Right lobe of liver (tissue), 6 donors: ENCODE measurements at regions of chr1 and their contacts with region 1.

Region 1: DNA sequence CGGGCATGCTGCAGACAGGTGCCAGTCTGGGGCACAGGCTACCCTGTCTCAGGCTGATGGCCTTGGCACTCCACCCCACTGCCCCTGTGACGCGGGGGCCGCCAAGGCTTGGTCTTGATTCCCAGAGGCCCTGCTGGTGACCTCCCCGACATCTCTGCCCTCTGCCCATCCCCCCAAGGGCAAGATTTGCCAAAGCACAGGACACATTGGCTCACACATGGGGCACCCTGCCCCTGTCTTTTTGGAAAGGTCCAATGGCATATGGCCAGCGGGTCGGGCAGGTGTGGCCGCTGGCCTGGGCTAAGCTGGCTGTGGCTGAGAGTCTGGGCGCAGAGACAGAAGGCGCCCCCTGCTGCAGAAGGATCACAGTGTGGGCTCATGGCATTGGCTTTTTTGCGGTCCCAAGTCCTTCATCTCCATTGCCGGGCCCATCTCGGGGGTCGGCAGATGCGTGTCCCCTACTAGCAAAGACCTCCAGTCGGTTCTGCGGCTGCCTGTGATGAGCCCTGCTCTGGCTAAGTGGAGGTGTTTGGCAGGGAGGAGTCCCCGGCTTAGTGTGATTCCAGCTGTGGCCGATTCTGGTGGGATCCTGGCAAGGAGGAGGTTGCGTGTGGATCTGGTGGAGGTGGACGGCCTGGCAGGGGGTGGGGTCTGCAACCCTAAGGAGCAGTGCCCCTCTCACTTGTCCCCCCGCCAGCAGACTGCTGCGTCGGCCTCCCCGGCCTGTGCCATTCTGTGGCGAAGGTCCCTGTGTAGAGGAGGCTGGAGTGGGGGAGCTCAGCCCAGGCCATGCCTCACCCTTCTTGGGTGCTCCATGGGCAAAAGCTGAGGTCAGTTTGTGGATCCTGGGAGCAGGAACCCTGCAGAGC is 4.9 kb downstream of the MIB2 start:
- DNase-seq: peak in 2 of 3 donors; percentile 61 to 91
- ATAC-seq: peak in 1 of 4 donors; percentile 6
- H3K4me3 ChIP-seq: no peak overlapping the region
- H3K27ac ChIP-seq: no peak overlapping the region
- H3K4me1 ChIP-seq: peaks cover 0 to 13% (median 5%) of the 10 kb centered on the region in 4 donors
- H3K27me3 ChIP-seq: no peaks in the 10 kb centered on the region
- CTCF ChIP-seq: peak in 3 of 4 donors; percentile 8 to 23 (median 12)
- POLR2A ChIP-seq: no peak

Region 2: DNA sequence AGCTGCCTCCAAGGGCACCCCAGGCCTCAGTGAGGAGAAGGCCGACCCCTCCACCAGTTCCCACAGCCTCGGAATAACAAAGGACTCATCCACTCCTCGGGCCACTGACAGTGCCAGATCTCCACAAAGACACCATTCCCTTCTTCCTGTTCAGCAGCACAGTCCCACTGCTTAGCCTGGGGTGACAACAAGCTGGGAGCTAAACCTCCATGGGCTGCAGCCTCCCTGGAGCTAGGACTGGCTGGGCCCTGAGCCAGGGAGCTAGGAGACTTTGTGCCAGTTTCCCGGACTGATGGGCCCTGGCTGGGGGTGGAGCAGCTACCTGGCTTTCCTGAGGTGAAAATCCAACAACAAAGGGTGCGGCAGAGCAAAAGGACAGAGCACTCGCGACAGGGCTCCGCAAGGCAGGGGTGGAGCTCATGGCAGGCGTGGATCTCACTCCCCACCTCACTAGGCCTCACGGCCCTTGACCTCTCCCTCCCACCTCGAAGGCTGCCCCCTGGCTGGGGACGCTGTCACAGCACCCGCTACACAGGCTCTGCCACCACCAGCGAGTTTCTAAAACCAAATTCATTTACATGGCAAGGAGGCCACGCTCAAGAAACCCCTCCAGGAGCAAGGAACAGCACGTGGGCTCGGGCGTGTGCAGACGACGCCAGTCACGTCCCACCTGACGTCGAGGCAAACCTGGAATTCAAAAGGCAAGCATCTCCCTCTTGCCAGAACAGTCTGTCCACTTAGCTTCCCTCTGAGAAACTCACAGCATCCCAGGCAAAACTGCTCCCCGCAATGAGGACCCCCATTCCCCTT is 58.6 kb after region 1 on chr1:
- intact Hi-C with region 1: loop called in 1 of 2 experiments (anchors 10 kb)
- DNase-seq: peak; percentile 76 to 89 (median 89)
- ATAC-seq: peak; percentile 87 to 97 (median 92)
- H3K4me3 ChIP-seq: no peak overlapping the region
- H3K27ac ChIP-seq: peak overlapping the region in 2 of 3 donors; percentile 17 to 37
- H3K4me1 ChIP-seq: peaks cover 0 to 15% (median 7%) of the 10 kb centered on the region in 4 donors
- H3K27me3 ChIP-seq: no peaks in the 10 kb centered on the region
- CTCF ChIP-seq: peak; percentile 37 to 72 (median 55)
- POLR2A ChIP-seq: no peak